ENCODE measurements at regions of chr5 and their contacts with region 1.

Region 1: GRCh38 chr5:177071666-177072385 is 14.9 kb upstream of the FGFR4 start:
- DNase-seq: peak; percentile 83 to 91 (median 84)
- H3K4me3 ChIP-seq: peak overlapping the region in 1 of 7 experiments; percentile 43
- H3K27ac ChIP-seq: no peak overlapping the region
- H3K4me1 ChIP-seq: peaks cover 3 to 7% (median 4%) of the 10 kb centered on the region in 4 experiments
- H3K27me3 ChIP-seq: no peaks in the 10 kb centered on the region

Region 2: GRCh38 chr5:176739461-176740051 is 332.3 kb before region 1 on chr5:
- CTCF ChIA-PET with region 1: no interaction called
- POLR2A ChIA-PET with region 1: no interaction called
- DNase-seq: no peak
- H3K4me3 ChIP-seq: no peak overlapping the region
- H3K27ac ChIP-seq: no peak overlapping the region
- H3K4me1 ChIP-seq: peaks cover 0 to 13% (median 7%) of the 10 kb centered on the region in 4 experiments
- H3K27me3 ChIP-seq: peaks cover 0 to 98% (median 54%) of the 10 kb centered on the region in 5 experiments

Region 3: DNA sequence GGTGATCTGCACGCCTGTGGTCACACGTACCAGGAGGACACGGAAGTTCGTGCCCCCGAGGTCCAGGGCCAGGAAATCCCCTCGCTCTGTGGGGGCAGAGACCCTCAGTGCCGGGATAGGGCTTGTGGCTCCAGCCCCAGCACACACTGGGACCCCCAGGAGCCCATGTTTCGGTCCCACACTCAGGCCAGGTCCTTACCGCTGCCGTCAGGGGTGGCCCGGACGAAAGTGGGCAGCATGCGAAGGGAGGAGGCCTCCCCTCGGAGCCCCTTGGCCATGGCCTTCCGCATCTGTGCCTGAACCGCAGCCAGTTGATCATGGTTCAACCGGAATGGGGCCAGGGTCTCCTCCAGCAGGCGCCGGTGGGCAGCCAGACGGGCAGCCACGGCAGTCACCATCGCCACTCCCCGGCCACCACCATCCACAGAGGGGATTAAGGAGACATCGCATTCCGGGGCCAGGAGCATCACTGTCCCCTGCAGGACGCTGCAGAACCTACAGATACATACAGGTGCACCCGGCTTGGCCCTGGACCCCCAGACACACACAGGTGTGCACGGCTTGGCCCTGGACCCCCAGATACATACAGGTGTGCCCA is 184.5 kb before region 1 on chr5:
- CTCF ChIA-PET with region 1: no interaction called
- POLR2A ChIA-PET with region 1: no interaction called
- DNase-seq: no peak
- H3K4me3 ChIP-seq: no peak overlapping the region
- H3K27ac ChIP-seq: no peak overlapping the region
- H3K4me1 ChIP-seq: no peaks in the 10 kb centered on the region
- H3K27me3 ChIP-seq: peaks cover 0 to 12% (median 2%) of the 10 kb centered on the region in 5 experiments

Region 4: DNA sequence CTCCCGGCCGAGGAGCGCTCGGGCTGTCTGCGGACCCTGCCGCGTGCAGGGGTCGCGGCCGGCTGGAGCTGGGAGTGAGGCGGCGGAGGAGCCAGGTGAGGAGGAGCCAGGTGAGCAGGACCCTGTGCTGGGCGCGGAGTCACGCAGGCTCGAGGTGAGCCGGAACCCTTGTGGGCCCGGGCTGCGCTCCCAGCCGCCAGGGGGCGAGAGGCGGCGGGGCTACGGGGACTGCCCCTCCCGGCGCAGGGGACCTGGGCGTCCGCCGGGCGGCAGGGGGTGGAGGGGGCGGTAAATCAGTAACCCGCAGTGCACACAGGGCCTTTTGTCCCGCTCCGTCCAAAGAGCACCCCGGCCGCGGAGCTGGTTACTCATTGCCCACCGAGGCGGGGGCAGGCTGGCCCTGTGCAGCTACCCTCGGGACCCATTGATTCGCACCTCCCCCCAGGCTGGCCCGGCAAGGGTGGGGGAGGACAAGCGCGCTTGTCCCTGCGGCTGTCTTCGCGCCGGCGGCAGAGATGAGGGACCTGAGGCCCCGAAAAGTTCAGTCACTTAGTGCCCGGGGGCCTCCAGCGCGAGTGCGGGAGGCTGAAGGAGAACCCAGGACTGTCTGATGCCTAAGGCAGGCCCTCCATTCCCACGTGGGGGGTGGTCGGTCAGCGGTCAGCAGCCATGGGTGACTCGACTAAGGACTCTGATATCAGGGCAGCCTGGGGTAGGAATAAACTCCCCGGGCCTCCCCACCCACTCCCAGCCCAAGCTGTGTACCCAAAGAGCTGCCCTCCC is 15.3 kb after region 1 on chr5:
- CTCF ChIA-PET with region 1: interaction called, 16 read pairs
- POLR2A ChIA-PET with region 1: no interaction called
- DNase-seq: peak; percentile 61 to 79 (median 74)
- H3K4me3 ChIP-seq: peak overlapping the region in 6 of 7 experiments; percentile 19 to 72 (median 48)
- H3K27ac ChIP-seq: no peak overlapping the region
- H3K4me1 ChIP-seq: peaks cover 0 to 15% (median 12%) of the 10 kb centered on the region in 4 experiments
- H3K27me3 ChIP-seq: peaks cover 0 to 28% (median 9%) of the 10 kb centered on the region in 5 experiments

Measured in common myeloid progenitor, CD34-positive (primary cell).